ENCODE measurements at regions of chr20 and their contacts with region 1.

Region 1: DNA sequence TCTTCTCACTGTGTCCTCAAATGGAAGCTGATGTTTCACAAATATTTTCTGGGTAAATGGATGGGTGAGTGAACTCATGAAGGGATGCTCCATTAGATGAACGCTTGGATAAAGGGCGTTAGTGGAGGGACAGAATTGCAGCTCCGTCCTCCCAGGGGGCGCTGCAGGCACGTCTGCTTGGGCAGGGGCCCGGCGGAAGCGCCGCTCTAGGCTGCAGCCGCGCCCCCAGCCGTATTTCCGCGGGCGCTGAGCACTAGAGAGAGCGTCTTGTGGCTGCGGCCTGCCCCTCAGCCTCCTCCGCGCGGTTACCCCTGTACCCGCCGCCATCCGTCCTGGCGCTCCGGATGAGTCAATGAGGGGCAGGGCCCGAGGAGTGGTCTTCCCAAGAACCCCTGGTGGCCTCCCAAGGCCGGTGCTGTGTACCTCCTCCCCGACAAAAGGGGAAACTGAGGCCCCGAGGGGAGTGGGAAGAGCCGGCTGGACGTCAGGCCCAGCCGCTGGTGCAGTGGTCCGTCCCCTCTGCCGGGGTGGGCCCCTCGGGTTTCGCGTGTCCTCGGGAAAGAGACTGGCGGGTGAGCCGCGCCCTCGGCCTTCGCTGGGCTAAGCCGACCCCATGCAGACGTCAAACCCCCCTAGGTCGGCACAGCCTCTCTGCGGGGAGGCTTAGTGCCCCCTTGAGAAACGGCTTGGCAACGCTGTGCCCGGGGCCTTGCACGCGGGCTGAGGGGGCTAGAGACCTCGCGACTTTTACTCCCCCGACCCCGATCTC is 11.5 kb upstream of the SNHG17 start:
- DNase-seq: peak; percentile 90
- ATAC-seq: peak; percentile 82
- H3K4me3 ChIP-seq: peak overlapping the region; percentile 86 to 99 (median 95)
- H3K27ac ChIP-seq: peak overlapping the region; percentile 78
- H3K4me1 ChIP-seq: peaks cover 42% of the 10 kb centered on the region
- H3K27me3 ChIP-seq: no peaks in the 10 kb centered on the region; a peak in 1 of 5 replicates
- CTCF ChIP-seq: peak; percentile 99
- EP300 ChIP-seq: peak; percentile 45 to 68; a peak in 3 of 4 replicates
- POLR2A ChIP-seq: peak; percentile 94 to 98
- RAD21 ChIP-seq: peak; percentile 94

Region 2: DNA sequence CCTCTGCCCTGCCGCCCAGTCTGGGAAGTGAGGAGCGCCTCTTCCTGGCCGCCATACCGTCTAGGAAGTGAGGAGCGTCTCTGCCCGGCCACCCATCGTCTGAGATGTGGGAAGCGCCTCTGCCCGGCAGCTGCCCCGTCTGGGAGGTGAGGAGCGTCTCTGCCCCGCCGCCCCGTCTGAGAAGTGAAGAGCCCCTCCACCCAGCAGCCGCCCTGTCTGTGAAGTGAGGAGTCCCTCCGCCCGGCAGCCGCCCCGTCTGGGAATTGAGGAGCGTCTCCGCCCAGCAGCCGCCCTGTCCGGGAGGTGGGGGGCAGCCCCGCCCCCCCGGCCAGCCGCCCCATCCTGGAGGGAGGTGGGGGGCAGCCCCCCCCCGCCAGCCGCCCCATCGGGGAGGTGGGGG is 39.3 kb before region 1 on chr20:
- CTCF ChIA-PET with region 1: no interaction called
- POLR2A ChIA-PET with region 1: no interaction called
- in situ Hi-C with region 1: no loop called
- intact Hi-C with region 1: no loop called
- DNase-seq: no peak
- ATAC-seq: no peak
- H3K4me3 ChIP-seq: no peak overlapping the region
- H3K27ac ChIP-seq: no peak overlapping the region
- H3K4me1 ChIP-seq: peaks cover 14% of the 10 kb centered on the region
- H3K27me3 ChIP-seq: no peaks in the 10 kb centered on the region
- CTCF ChIP-seq: no peak
- EP300 ChIP-seq: no peak
- POLR2A ChIP-seq: no peak
- RAD21 ChIP-seq: no peak

Region 3: GRCh38 chr20:38460040-38460623 is 13.5 kb after region 1 on chr20:
- CTCF ChIA-PET with region 1: no interaction called
- POLR2A ChIA-PET with region 1: interaction called, 4 read pairs
- in situ Hi-C with region 1: no loop called
- intact Hi-C with region 1: loop called (anchors 1 kb)
- DNase-seq: peak; percentile 92
- ATAC-seq: peak; percentile 97
- H3K4me3 ChIP-seq: 0 out of 6 replicates have a peak overlapping the region, but pooled peaks of 1 of the 3 experiments have one; percentile 3
- H3K27ac ChIP-seq: peak overlapping the region; percentile 7
- H3K4me1 ChIP-seq: peaks cover 11% of the 10 kb centered on the region
- H3K27me3 ChIP-seq: no peaks in the 10 kb centered on the region
- CTCF ChIP-seq: no peak
- EP300 ChIP-seq: no peak
- POLR2A ChIP-seq: no peak
- RAD21 ChIP-seq: no peak

Region 4: GRCh38 chr20:38472513-38473372 is 26.1 kb after region 1 on chr20 and contains the start of gene RALGAPB:
- CTCF ChIA-PET with region 1: interaction called, 18 read pairs
- POLR2A ChIA-PET with region 1: interaction called, 92 read pairs
- in situ Hi-C with region 1: no loop called
- intact Hi-C with region 1: loop called (anchors 1 kb)
- DNase-seq: peak; percentile 100
- ATAC-seq: peak; percentile 93
- H3K4me3 ChIP-seq: peak within 1 kb of the TSS; percentile 76 to 96 (median 90)
- H3K27ac ChIP-seq: peak within 1 kb of the TSS; percentile 67
- H3K4me1 ChIP-seq: peaks cover 43% of the 10 kb centered on the region
- H3K27me3 ChIP-seq: no peaks in the 10 kb centered on the region; a peak in 1 of 5 replicates
- CTCF ChIP-seq: peak; percentile 96
- EP300 ChIP-seq: peak in 1 of 2 experiments; percentile 28; a peak in 2 of 4 replicates
- POLR2A ChIP-seq: peak; percentile 82 to 92
- RAD21 ChIP-seq: peak; percentile 63
- total RNA-seq, gene RALGAPB: 30.6 and 36.5 TPM in 2 replicates

Region 5: GRCh38 chr20:38919683-38920082 is 473.1 kb after region 1 on chr20:
- CTCF ChIA-PET with region 1: no interaction called
- POLR2A ChIA-PET with region 1: no interaction called
- in situ Hi-C with region 1: no loop called
- intact Hi-C with region 1: no loop called
- DNase-seq: no peak
- ATAC-seq: no peak
- H3K4me3 ChIP-seq: no peak overlapping the region
- H3K27ac ChIP-seq: no peak overlapping the region
- H3K4me1 ChIP-seq: peaks cover 43% of the 10 kb centered on the region
- H3K27me3 ChIP-seq: peaks cover 7 to 23% of the 10 kb centered on the region in 2 experiments; a peak in 4 of 5 replicates
- CTCF ChIP-seq: no peak
- EP300 ChIP-seq: no peak
- POLR2A ChIP-seq: no peak
- RAD21 ChIP-seq: no peak

Measured in HepG2 (cell line).